Common myeloid progenitor, CD34-positive (primary cell): ENCODE measurements at regions of chr3 and their contacts with region 1.

Region 1: DNA sequence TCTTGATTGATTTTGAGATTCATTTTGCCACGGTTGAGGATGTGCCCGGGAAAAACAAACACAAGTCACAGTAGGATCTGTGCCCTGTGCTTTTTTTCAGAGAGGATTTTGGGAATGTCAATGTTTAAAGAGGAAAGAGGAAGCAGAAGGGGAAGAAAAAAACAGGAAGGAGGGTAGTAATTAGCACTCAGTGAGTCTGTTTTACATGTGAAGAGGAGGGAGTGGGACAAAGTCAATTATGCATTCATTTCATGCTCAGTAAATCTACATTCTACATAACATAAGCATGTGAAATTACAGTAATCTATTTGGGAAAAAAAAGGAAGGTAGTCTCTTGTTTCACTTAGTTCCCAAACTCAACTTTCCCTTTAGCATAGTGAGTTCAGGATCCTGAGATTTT is 18.3 kb upstream of the CD200 start:
- DNase-seq: no peak
- H3K4me3 ChIP-seq: no peak overlapping the region
- H3K27ac ChIP-seq: no peak overlapping the region
- H3K4me1 ChIP-seq: peaks cover 0 to 3% (median 1%) of the 10 kb centered on the region in 4 experiments
- H3K27me3 ChIP-seq: no peaks in the 10 kb centered on the region

Region 2: DNA sequence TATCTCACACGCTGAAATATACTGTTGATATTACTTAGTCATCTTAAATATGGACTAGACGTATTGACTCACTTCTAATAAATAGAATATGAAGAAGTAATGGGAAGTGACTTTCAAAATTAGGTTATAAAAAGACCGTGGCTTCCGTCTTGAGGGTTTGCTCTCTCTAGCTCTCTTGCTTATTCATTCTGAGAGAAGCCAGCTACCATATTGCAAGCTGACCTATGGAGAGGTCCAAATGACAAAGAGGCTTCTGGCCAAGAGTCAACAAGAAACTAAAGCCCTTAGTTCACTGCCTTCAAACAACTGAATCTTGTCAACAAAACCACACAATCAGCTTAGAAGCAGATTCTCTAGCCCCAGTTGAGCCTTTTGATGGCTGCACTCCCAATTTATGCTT is 66.7 kb before region 1 on chr3:
- CTCF ChIA-PET with region 1: no interaction called
- POLR2A ChIA-PET with region 1: no interaction called
- DNase-seq: no peak
- H3K4me3 ChIP-seq: no peak overlapping the region
- H3K27ac ChIP-seq: no peak overlapping the region
- H3K4me1 ChIP-seq: peaks cover 0 to 9% (median 4%) of the 10 kb centered on the region in 4 experiments
- H3K27me3 ChIP-seq: no peaks in the 10 kb centered on the region

Region 3: DNA sequence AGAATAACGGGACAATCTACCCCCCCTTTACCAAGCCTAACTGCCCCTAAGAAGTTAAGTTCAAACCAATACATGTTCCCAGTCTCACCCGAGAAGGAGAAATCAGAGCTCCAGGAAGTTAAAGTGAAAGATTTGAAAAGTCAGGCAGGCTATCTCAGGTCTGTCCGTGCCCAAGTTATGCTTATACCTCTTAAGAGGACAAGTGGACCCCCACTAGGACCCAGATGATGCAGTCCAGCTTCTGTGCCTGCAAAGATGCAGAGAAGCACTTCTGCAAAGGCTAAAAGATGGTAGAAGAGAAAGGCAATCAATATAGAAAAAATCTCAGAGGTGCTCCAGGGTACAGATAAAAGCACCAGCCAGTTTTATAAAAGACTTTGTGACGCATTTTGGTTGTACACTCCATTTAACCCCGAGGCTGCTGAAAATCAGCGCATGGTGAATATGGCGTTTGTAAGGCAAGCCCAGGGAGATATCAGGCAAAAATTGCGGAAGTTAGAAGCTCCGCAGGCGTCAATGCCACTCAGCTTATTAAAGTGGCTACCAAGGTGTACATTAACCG is 10.8 kb before region 1 on chr3:
- CTCF ChIA-PET with region 1: interaction called, 12 read pairs
- POLR2A ChIA-PET with region 1: no interaction called
- DNase-seq: peak; percentile 39 to 85 (median 75)
- H3K4me3 ChIP-seq: peak overlapping the region in 5 of 7 experiments; percentile 52 to 80 (median 76)
- H3K27ac ChIP-seq: no peak overlapping the region
- H3K4me1 ChIP-seq: peaks cover 9 to 21% (median 14%) of the 10 kb centered on the region in 4 experiments
- H3K27me3 ChIP-seq: no peaks in the 10 kb centered on the region